ENCODE measurements at regions of chr14 and their contacts with region 1.

Region 1: DNA sequence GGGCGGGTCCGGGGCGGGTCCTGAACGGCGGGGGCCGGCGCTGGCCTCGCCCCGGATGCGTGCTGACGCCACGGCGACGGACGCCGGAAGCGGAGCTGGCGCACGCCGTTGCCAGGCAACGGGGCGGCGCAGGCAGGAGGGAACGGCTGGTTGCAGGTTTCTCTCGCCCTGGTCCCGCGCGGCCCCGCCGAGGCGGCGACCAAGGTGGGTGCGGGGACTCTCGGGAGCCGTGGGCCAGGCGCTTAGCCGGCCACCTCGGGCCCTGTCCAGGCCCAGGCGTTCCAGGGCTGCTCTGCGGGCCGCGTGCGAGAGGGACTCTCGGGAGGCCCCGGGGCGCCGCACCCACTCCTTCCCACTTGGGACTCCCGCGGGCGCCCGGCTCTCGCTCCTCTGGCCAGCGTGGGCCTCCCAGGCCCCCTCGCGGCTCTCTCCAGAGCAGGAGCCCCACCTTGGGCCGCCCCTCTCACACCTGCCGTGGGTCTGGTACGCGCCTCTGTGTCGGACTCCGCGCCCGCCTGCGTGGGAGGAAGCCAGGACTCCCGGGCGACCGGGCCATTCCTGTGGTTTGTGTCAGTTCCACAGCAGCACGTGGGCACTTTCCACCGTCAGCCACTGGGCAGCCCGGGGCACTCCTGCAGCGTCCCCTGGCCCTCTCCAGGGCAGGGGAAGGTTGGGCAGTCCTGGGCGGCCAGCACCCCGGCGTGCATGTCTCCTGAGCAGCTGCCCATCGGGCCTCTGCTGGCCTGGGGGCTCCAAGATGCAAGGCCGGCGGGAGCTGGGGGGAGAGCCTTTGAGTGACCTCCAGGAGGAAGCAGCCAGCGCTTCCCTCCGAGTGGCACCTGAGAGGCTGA is at the start of gene CLBA1:
- DNase-seq: peak; percentile 75 to 99 (median 88)

Region 2: GRCh38 chr14:105020815-105021655 is 35.1 kb after region 1 on chr14 and contains the start of gene CDCA4:
- intact Hi-C with region 1: loop called (anchors 1 kb)
- DNase-seq: peak; percentile 93 to 100 (median 98)

Measured in posterior cingulate gyrus (tissue), 11 donors.